PC-9 (cell line): ENCODE measurements at regions of chr2 and their contacts with region 1.

Region 1: GRCh38 chr2:74391580-74392448 is 11.7 kb upstream of the DCTN1 start:
- DNase-seq: peak; percentile 82 to 89
- H3K4me3 ChIP-seq: peak overlapping the region; percentile 90
- H3K27ac ChIP-seq: peak overlapping the region; percentile 69
- H3K4me1 ChIP-seq: peaks cover 19% of the 10 kb centered on the region
- H3K27me3 ChIP-seq: no peaks in the 10 kb centered on the region
- CTCF ChIP-seq: peak; percentile 99

Region 2: DNA sequence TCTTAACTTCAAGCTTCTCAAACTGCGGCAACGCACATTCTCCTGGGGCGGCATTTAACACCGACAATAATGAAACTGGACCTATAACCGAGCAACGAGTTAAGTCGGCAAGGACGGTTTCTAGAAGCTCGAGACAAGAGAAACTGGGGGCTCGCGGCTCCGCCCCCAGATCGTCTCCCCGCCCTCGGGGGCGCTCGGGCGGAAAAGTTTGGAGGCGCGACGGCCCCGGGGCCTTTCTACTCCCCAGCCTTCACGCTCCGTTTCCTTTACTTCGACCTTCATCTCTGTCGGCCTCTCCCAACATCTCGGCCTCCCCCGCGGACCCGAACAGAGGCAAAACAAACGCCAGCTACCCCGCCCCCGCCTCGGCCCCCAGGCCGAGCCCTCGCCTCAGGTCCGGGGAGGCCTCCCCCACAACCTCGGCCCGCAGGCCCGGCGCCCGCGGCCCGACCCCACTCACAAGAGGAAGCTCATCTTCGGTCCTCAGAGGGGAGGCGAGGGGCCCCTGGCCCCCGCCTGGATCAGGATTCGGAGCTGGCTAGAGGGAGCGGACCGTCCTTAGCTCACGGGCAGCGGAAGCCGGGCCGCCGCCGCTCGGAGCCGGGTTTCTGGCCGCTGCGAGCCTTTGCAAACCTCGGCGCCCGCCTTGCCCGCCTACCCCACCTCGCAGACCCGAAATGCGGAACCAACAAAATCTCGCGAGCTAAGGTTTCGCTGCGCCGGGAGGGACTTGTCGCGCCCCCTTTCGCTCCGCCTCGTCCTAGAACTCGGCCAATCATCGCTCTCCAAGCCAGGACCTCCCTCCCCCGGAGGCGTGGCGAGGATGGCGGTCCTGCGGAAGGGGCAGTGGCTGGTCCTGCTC is 213.4 kb before region 1 on chr2 and contains the start of gene MOB1A:
- CTCF ChIA-PET with region 1: interaction called, 13 read pairs
- POLR2A ChIA-PET with region 1: no interaction called
- intact Hi-C with region 1: no loop called
- DNase-seq: peak; percentile 95 to 98
- H3K4me3 ChIP-seq: peak within 1 kb of the TSS; percentile 84
- H3K27ac ChIP-seq: peak within 1 kb of the TSS; percentile 76
- H3K4me1 ChIP-seq: peaks cover 21% of the 10 kb centered on the region
- H3K27me3 ChIP-seq: no peaks in the 10 kb centered on the region
- CTCF ChIP-seq: no peak
- total RNA-seq, gene MOB1A: 138 and 143 TPM in 2 replicates

Region 3: DNA sequence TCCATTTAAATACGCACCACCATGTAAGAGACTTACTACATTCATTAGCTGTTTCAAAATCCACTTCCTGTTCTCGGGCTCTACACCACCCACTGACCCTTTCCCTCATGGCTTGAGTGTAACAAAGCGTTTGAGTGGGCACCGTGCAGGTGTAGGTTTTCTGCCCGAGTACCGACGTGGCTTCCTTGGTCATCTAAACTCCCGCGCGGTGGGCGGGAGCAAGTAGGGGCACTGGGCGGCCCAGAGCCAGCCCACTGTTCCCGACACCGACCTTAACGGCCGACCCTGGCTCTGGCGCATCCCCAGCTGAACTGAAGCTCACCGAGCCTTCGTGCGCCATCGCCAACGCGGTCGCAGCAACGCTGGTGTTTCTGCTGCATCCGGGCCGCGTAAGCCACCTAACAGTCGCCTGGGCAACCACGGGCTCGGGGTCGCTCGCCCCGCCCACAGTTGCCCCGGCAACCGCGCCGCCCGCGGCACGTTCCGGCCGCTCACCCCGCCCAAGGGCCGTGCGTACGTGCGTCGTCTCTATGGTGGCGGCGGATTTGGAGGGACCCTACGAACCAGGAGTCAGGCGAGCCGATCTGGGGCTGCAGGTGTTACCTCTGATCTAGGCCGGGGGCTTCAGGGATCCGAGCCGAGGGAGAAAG is 29.5 kb after region 1 on chr2 and contains the starts of genes C2orf81 and WDR54:
- CTCF ChIA-PET with region 1: no interaction called
- POLR2A ChIA-PET with region 1: no interaction called
- intact Hi-C with region 1: loop called (anchors 1 kb)
- DNase-seq: peak; percentile 78 to 93
- H3K4me3 ChIP-seq: peak within 1 kb of the TSS; percentile 67
- H3K27ac ChIP-seq: peak within 1 kb of the TSS; percentile 40
- H3K4me1 ChIP-seq: peaks cover 9% of the 10 kb centered on the region
- H3K27me3 ChIP-seq: no peaks in the 10 kb centered on the region
- CTCF ChIP-seq: no peak
- total RNA-seq, gene C2orf81: 9.8 and 12.0 TPM in 2 replicates
- total RNA-seq, gene WDR54: 46.7 and 53.0 TPM in 2 replicates

Region 4: GRCh38 chr2:74447230-74447999 is 55.6 kb after region 1 on chr2:
- CTCF ChIA-PET with region 1: no interaction called
- POLR2A ChIA-PET with region 1: no interaction called
- intact Hi-C with region 1: no loop called
- DNase-seq: peak in 1 of 2 experiments; percentile 32
- H3K4me3 ChIP-seq: no peak overlapping the region
- H3K27ac ChIP-seq: no peak overlapping the region
- H3K4me1 ChIP-seq: peaks cover 8% of the 10 kb centered on the region
- H3K27me3 ChIP-seq: no peaks in the 10 kb centered on the region
- CTCF ChIP-seq: no peak